ENCODE measurements at regions of chr7 and their contacts with region 1.

Region 1: DNA sequence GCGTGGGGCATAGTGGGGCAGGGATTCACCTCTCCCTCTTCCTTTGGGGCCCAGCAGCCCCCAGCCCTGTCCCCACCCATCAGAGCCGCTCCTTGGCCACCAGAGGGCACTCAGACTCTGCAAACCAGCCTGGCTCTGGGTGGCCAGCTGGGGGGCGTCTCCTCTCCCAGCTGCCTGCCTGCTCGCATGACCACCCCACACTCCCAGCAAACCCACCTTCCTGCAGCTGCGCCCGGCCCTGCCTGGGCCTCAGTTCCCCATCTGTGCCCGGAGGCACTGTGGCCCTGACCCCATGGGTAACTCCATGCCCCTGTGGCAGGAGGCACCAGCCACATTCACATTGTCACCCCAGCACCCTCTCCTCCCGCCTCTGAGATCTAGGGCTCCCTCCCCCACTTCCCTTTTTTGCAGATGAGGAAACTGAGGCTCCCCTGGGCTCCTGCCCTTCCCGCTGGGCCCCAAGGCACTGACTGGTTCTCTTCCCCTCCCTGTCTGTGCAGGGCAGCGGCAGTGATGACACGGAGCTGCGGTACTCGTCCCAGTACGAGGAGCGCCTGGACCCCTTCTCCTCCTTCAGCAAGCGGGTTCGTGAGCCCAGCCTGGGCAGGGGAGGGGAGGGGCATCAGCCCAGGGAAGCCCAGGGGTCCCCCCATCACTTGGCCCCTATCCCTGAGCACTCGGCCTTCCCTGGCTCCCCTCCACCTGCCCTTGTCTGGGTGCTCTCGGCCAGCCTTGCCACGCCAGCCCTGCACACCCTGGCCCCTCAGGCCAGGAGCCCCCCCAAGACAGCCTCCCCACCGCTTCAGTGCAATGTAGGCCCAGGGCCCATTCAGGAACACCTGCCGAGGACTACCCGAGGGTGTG is 6.9 kb upstream of the SH2B2 start:
- DNase-seq: peak; percentile 37 to 52
- H3K4me3 ChIP-seq: no peak overlapping the region
- H3K27ac ChIP-seq: no peak overlapping the region
- H3K4me1 ChIP-seq: peaks cover 0 to 5% of the 10 kb centered on the region in 2 donors
- H3K27me3 ChIP-seq: no peaks in the 10 kb centered on the region
- CTCF ChIP-seq: peak; percentile 49 to 88 (median 74)
- POLR2A ChIP-seq: no peak

Region 2: GRCh38 chr7:102222445-102222844 is 57.3 kb before region 1 on chr7:
- intact Hi-C with region 1: no loop called
- DNase-seq: no peak
- H3K4me3 ChIP-seq: no peak overlapping the region
- H3K27ac ChIP-seq: no peak overlapping the region
- H3K4me1 ChIP-seq: no peaks in the 10 kb centered on the region
- H3K27me3 ChIP-seq: no peaks in the 10 kb centered on the region
- CTCF ChIP-seq: no peak
- POLR2A ChIP-seq: no peak

Region 3: DNA sequence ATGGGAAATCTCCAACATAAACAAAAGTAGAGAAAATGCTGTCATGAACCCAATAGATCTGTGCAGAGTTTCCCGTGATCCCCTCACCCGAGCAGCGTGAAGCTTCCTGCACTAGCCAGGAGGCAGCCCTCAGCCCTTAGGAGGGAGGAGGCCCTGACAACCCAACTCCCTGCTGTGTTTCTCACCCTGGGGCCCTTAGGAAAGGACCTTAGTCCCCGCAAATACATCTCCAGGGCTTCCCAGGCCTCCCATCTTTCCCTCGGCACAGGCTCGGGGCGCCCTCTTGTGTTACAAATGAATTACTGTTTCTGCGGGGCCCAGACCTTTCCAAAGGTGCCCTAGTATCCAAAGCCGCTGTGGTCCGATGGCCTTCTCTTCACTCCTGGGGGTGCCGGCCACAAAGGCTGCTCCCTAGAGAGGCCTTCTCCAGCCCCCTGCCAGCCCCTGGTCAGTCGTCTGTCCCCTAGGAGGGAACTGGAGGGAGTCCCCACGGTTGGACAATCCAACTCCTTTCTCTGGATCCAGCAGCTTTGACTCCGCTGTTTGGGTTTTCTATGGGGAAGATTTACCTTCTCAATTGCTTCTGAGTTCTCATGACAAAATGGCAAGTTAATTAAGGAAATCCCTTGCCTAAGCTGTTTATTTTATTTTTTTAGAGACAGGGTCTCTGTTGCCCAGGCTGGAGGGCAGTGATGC is 43.0 kb before region 1 on chr7:
- intact Hi-C with region 1: no loop called
- DNase-seq: peak; percentile 50 to 62
- H3K4me3 ChIP-seq: no peak overlapping the region
- H3K27ac ChIP-seq: no peak overlapping the region
- H3K4me1 ChIP-seq: no peaks in the 10 kb centered on the region
- H3K27me3 ChIP-seq: no peaks in the 10 kb centered on the region
- CTCF ChIP-seq: peak; percentile 51 to 82 (median 70)
- POLR2A ChIP-seq: no peak

Region 4: DNA sequence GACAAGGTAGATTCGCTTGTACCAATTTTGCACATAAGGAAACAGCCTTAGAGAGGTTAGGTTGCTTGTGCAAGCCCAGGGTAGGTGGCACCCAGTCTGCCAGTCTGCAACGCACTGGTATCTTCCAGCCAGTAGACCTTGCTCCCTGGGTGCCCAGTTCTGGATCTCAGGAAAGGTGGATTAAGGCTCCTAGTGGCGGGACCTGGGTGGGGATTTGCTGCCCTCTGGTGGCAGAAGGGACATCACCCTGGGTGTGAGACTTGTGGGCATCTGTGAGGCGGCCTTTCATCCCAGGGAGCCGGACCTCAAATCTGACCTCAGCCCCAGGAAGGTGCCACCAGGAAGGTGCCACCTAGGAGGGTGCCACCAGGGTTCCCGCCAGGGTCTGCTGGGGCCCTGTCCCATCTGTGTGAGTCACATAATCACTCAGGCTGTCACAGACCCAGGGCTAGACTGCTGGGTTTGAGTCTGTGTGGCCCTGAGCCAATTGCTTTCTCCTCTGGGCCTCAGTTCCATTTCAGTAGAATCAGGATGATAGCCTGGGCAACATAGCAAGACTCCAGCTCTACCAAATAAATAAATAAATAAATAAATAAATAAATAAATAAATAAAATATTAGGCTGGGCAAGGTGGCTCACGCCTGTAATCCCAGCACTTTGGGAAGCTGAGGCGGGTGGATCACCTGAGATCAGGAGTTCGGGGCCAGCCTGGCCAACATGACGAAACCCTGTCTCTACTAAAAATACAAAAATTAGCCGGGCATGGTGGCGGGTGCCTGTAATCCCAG is 111.1 kb after region 1 on chr7:
- intact Hi-C with region 1: loop called (anchors 2 kb)
- DNase-seq: peak; percentile 84 to 89
- H3K4me3 ChIP-seq: no peak overlapping the region
- H3K27ac ChIP-seq: no peak overlapping the region
- H3K4me1 ChIP-seq: no peaks in the 10 kb centered on the region
- H3K27me3 ChIP-seq: no peaks in the 10 kb centered on the region
- CTCF ChIP-seq: peak; percentile 85 to 95 (median 95)
- POLR2A ChIP-seq: no peak

Measured in thyroid gland (tissue), 4 donors.